ENCODE measurements at regions of chr5 and their contacts with region 1.

Region 1: DNA sequence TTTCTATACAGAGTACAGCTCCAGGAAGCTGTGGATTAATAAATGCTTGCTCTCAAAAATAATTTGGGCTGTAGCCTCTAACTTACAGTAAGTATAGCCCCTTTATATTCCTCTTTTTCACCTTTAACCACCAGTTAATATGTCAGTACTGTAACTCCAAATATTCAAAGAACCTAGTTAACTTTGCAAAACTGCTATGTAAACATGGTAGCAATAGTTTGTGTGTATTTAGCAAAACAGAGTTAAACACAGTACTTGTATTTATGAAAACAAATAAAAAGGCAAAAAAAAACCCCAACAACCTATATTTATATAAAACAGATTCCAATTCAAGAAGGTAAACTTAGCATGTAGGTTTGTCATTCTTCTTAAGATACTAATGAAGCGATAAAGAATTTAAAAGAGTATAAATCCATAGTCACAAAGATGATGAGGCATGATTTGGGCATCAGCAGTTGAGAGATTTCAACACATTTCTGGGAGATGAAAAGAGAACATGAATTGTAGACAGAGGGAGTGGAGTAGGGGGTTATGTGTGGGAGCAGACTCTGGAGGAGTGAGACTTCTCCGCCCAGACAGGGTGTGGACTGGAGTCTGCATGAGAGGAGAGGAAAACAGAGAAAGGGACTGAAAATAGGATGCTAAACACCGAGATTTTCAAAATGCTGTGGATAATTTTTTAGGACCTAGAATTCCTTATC is 47.0 kb upstream of the F2RL1 start:
- DNase-seq: no peak
- H3K4me3 ChIP-seq: no peak overlapping the region
- CTCF ChIP-seq: no peak

Region 2: GRCh38 chr5:76601470-76601869 is 170.4 kb before region 1 on chr5:
- CTCF ChIA-PET with region 1: interaction called, 363 read pairs
- POLR2A ChIA-PET with region 1: interaction called, 3 read pairs
- DNase-seq: no peak
- H3K4me3 ChIP-seq: no peak overlapping the region
- CTCF ChIP-seq: peak; percentile 51

Region 3: GRCh38 chr5:76641514-76642120 is 130.2 kb before region 1 on chr5:
- CTCF ChIA-PET with region 1: interaction called, 49 read pairs
- POLR2A ChIA-PET with region 1: no interaction called
- DNase-seq: no peak
- H3K4me3 ChIP-seq: no peak overlapping the region
- CTCF ChIP-seq: peak; percentile 60

Region 4: DNA sequence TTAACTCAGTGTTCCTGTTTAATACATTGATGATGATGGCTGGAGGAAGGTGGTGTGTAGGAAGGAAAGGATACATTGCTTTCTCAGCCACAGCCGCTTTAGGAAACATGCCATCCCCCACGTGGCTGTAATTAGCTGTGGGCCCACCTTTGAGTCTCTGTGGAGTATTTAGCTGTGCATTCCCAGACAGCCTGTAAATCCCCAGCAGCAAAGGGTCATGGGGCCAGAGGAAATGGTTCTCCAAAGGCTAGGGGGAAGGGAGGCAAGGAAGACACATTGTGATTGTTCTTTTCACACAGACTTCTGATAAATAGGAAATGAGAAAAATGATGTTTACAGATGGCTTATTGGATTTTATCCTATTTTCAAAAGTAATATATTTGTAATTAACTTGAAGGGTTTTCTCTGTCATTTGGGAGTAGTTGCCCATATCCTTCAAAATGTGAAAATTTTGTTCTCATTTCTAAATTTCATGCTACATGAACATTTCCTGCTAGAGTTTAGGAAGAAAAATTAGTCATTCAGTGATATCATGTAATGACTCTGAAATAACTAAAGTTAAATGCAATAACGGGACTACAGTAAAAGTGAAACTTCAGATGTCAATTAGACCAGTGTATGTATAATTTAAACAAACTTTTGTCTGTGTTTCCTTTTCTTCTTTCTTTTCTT is 80.3 kb before region 1 on chr5:
- CTCF ChIA-PET with region 1: interaction called, 13 read pairs
- POLR2A ChIA-PET with region 1: no interaction called
- DNase-seq: no peak
- H3K4me3 ChIP-seq: no peak overlapping the region
- CTCF ChIP-seq: no peak

Region 5: GRCh38 chr5:76745670-76746069 is 26.2 kb before region 1 on chr5:
- CTCF ChIA-PET with region 1: interaction called, 20 read pairs
- POLR2A ChIA-PET with region 1: no interaction called
- DNase-seq: no peak
- H3K4me3 ChIP-seq: no peak overlapping the region
- CTCF ChIP-seq: no peak

Region 6: GRCh38 chr5:76782444-76782843 is 10.6 kb after region 1 on chr5:
- CTCF ChIA-PET with region 1: interaction called, 17 read pairs
- POLR2A ChIA-PET with region 1: no interaction called
- DNase-seq: no peak
- H3K4me3 ChIP-seq: no peak overlapping the region
- CTCF ChIP-seq: no peak

Measured in AG04449 (cell line).